ENCODE measurements at regions of chr3 and their contacts with region 1.

Region 1: GRCh38 chr3:163622384-163622783 is 1455.9 kb downstream of the SI start:
- DNase-seq: peak; percentile 63
- ATAC-seq: peak; percentile 96
- H3K4me3 ChIP-seq: no peak overlapping the region
- H3K27ac ChIP-seq: no peak overlapping the region
- H3K4me1 ChIP-seq: no peaks in the 10 kb centered on the region
- H3K27me3 ChIP-seq: no peaks in the 10 kb centered on the region
- CTCF ChIP-seq: peak; percentile 85

Region 2: DNA sequence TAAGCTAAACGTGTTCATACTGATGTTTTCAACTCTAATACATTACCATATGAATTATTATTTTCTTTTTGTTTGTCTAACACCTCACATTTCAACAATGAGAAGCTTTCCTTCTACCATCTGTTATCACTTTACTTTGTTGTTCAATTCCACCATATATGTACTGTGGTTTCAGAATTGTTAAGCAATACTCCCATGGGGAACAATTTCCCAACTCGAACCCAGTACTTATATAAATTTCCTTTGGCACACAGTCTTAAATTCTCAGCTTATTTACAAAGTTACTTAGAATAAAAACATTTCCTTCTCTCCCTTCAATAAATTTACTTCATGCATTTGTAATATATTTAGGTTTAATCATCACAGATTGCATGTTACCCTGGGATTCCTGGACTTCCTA is 361.3 kb before region 1 on chr3:
- CTCF ChIA-PET with region 1: no interaction called
- POLR2A ChIA-PET with region 1: no interaction called
- intact Hi-C with region 1: loop called (anchors 5 kb)
- DNase-seq: no peak
- ATAC-seq: no peak
- H3K4me3 ChIP-seq: no peak overlapping the region
- H3K27ac ChIP-seq: no peak overlapping the region
- H3K4me1 ChIP-seq: no peaks in the 10 kb centered on the region
- H3K27me3 ChIP-seq: no peaks in the 10 kb centered on the region
- CTCF ChIP-seq: no peak

Region 3: GRCh38 chr3:163476183-163476582 is 146.2 kb before region 1 on chr3:
- CTCF ChIA-PET with region 1: no interaction called
- POLR2A ChIA-PET with region 1: no interaction called
- intact Hi-C with region 1: loop called (anchors 1 kb)
- DNase-seq: peak; percentile 75
- ATAC-seq: peak; percentile 89
- H3K4me3 ChIP-seq: no peak overlapping the region
- H3K27ac ChIP-seq: no peak overlapping the region
- H3K4me1 ChIP-seq: no peaks in the 10 kb centered on the region
- H3K27me3 ChIP-seq: no peaks in the 10 kb centered on the region
- CTCF ChIP-seq: peak; percentile 78

Region 4: GRCh38 chr3:163490119-163490518 is 132.3 kb before region 1 on chr3:
- CTCF ChIA-PET with region 1: no interaction called
- POLR2A ChIA-PET with region 1: no interaction called
- intact Hi-C with region 1: loop called (anchors 5 kb)
- DNase-seq: peak; percentile 79
- ATAC-seq: peak; percentile 95
- H3K4me3 ChIP-seq: no peak overlapping the region
- H3K27ac ChIP-seq: no peak overlapping the region
- H3K4me1 ChIP-seq: no peaks in the 10 kb centered on the region
- H3K27me3 ChIP-seq: no peaks in the 10 kb centered on the region
- CTCF ChIP-seq: peak; percentile 91

Region 5: DNA sequence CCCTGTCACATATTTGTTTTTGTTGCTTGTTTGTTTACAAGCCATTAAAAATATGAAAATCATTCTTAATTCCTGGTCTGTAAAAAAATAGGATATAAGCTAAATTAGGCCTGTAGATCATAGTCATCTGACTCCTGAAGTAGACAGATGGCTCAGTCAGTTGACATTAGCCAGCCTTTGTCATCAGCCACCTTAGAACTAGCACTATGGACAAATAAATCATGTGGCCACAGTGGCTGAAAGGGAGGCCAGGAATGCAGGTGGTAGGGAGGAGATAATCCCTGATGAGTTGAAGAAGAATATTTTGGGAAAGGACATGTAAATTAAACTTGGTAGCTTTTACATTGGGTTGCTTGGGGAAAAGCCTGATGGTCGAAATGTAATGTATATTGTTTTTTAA is 89.0 kb before region 1 on chr3:
- CTCF ChIA-PET with region 1: no interaction called
- POLR2A ChIA-PET with region 1: no interaction called
- intact Hi-C with region 1: no loop called
- DNase-seq: no peak
- ATAC-seq: no peak
- H3K4me3 ChIP-seq: no peak overlapping the region
- H3K27ac ChIP-seq: no peak overlapping the region
- H3K4me1 ChIP-seq: no peaks in the 10 kb centered on the region
- H3K27me3 ChIP-seq: no peaks in the 10 kb centered on the region
- CTCF ChIP-seq: no peak

Region 6: DNA sequence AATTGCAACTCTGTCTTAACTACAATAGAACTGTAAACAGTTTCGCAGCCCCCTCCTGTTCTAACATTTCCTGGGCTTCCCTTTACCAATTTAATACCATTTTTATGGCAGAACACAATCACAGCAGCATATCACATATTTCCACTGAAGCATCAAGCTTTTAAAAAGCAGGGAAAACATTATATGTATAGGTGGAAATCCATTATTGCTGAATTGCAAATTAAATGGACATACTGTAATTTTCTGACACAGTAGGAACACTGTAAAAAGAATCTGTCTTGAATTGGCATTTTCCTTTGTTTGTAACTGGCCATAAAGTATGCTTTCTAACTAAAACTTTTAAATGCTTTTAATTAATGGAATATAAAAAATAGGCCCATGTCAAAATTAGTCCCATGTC is 70.1 kb after region 1 on chr3:
- CTCF ChIA-PET with region 1: no interaction called
- POLR2A ChIA-PET with region 1: no interaction called
- intact Hi-C with region 1: no loop called
- DNase-seq: no peak
- ATAC-seq: no peak
- H3K4me3 ChIP-seq: no peak overlapping the region
- H3K27ac ChIP-seq: no peak overlapping the region
- H3K4me1 ChIP-seq: peaks cover under 1% of the 10 kb centered on the region; the same call in 1 of the 2 replicates
- H3K27me3 ChIP-seq: no peaks in the 10 kb centered on the region
- CTCF ChIP-seq: no peak